Heart left ventricle (tissue), 16 donors: ENCODE measurements at regions of chr19 and their contacts with region 1.

Region 1: GRCh38 chr19:17069218-17069617 is 6.0 kb downstream of the HAUS8 start:
- DNase-seq: no peak
- ATAC-seq: no peak
- H3K4me3 ChIP-seq: no peak overlapping the region
- H3K27ac ChIP-seq: no peak overlapping the region
- H3K4me1 ChIP-seq: peaks cover 0 to 25% (median 8%) of the 10 kb centered on the region in 12 donors
- H3K27me3 ChIP-seq: no peaks in the 10 kb centered on the region
- CTCF ChIP-seq: no peak
- POLR2A ChIP-seq: no peak

Region 2: GRCh38 chr19:16957151-16957701 is 112.0 kb before region 1 on chr19:
- intact Hi-C with region 1: no loop called
- DNase-seq: no peak
- ATAC-seq: peak in 3 of 4 donors; percentile 20 to 56 (median 41)
- H3K4me3 ChIP-seq: no peak overlapping the region
- H3K27ac ChIP-seq: peak overlapping the region in 2 of 12 donors; percentile 7 to 58
- H3K4me1 ChIP-seq: peaks cover 0 to 21% (median 8%) of the 10 kb centered on the region in 12 donors
- H3K27me3 ChIP-seq: peaks cover 0 to 4% (median 0%) of the 10 kb centered on the region in 9 donors
- CTCF ChIP-seq: no peak
- POLR2A ChIP-seq: no peak

Region 3: DNA sequence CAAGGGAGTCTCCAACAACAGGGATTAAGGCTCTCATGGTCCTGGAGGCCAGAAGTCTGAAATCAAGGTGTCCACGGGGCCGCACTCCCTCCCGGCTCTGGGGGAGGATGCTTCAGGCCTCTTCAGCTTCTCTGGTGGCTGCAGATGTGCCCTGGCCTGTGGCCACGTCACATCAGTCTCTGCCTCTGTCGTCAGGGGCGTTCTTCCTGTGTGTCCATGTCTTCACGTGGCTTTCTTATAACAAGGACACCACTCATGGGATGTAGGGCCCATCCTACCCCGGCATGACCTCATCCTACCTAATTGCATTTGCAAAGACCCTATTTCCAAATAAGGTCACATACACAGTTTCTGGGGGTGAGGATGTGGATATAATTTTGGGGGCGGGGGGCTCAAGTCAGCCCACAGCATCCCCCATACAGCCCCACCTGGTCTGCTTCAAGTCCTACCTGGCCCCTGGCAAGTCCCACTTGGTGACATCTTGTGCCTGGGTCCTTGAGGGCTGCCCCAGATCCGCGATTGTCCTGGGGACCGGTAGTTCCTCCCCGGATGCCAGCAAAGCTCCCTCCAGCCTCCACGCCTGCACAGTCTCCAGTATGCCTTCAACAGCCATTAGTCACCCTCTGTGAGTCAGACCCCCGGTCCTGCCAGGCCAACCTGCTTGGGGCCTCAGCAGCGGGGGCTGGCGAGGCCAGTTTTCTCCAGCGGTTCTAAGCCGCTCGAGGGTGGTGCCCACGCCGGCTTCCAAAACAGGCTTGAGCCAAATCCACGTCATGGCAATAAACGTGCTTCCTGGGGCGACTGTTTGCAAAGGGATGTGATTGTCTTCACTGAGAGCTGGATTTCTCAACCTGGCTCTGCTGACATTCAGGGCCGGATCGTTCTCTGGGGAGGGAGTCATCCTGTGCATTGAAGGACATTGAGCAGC is 38.6 kb after region 1 on chr19:
- intact Hi-C with region 1: no loop called
- DNase-seq: peak; percentile 75 to 96 (median 84)
- ATAC-seq: peak; percentile 44 to 95 (median 92)
- H3K4me3 ChIP-seq: peak overlapping the region in 3 of 12 donors; percentile 5 to 14 (median 8)
- H3K27ac ChIP-seq: peak overlapping the region in 11 of 12 donors; percentile 22 to 93 (median 76)
- H3K4me1 ChIP-seq: peaks cover 4 to 86% (median 26%) of the 10 kb centered on the region in 12 donors
- H3K27me3 ChIP-seq: no peaks in the 10 kb centered on the region
- CTCF ChIP-seq: no peak
- POLR2A ChIP-seq: no peak

Region 4: DNA sequence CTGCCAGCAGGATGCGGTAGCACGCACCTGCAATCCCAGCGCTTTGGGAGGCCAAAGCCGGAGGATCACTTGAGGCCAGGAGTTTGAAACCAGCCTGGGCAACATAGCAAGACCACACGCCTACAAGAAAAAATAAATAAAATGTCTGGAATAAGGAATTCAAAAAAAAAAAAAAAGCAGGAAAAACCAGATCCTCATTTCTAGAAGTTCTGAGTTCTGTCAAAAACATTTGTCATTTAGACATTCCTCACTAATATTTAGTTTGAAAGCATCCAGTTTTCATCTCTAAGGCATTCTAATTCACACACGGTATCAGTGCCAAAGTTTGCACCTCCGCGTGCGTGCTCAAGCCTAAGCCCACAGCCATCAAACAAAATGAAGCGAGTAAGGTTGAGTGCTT is 109.1 kb after region 1 on chr19:
- intact Hi-C with region 1: loop called in 1 of 10 experiments (anchors 5 kb)
- DNase-seq: no peak
- ATAC-seq: no peak
- H3K4me3 ChIP-seq: no peak overlapping the region
- H3K27ac ChIP-seq: no peak overlapping the region
- H3K4me1 ChIP-seq: peaks cover 0 to 8% (median 0%) of the 10 kb centered on the region in 12 donors
- H3K27me3 ChIP-seq: no peaks in the 10 kb centered on the region
- CTCF ChIP-seq: no peak
- POLR2A ChIP-seq: no peak

Region 5: GRCh38 chr19:17235618-17236377 is 166.6 kb after region 1 on chr19:
- intact Hi-C with region 1: loop called in 2 of 10 experiments (anchors 5 to 10 kb)
- DNase-seq: peak; percentile 69 to 91 (median 76)
- ATAC-seq: peak; percentile 71 to 89 (median 88)
- H3K4me3 ChIP-seq: peak overlapping the region; percentile 11 to 82 (median 66)
- H3K27ac ChIP-seq: peak overlapping the region in 11 of 12 donors; percentile 53 to 86 (median 75)
- H3K4me1 ChIP-seq: peaks cover 4 to 29% (median 19%) of the 10 kb centered on the region in 12 donors
- H3K27me3 ChIP-seq: no peaks in the 10 kb centered on the region
- CTCF ChIP-seq: peak; percentile 31 to 80 (median 58)
- POLR2A ChIP-seq: peak in 1 of 2 donors; percentile 21